Dendritic cell treated with granulocyte-macrophage colony-stimulating factor and Interleukin-4, amounts not matched to agents 40 ng/mL and 50 ng/mL, for 4 days (primary cell): ENCODE measurements at regions of chr17 and their contacts with region 1.

Region 1: GRCh38 chr17:75295201-75296158 is 6.2 kb upstream of the SLC25A19 start:
- H3K4me3 Mint-ChIP-seq: peak overlapping the region; percentile 62
- H3K27ac Mint-ChIP-seq: peak overlapping the region; percentile 97
- H3K4me1 Mint-ChIP-seq: peaks cover 63% of the 10 kb centered on the region
- H3K27me3 Mint-ChIP-seq: no peaks in the 10 kb centered on the region

Region 2: GRCh38 chr17:75159191-75160031 is 136.1 kb before region 1 on chr17:
- intact Hi-C with region 1: no loop called
- H3K4me3 Mint-ChIP-seq: no peak overlapping the region
- H3K27ac Mint-ChIP-seq: no peak overlapping the region
- H3K4me1 Mint-ChIP-seq: peaks cover 10% of the 10 kb centered on the region
- H3K27me3 Mint-ChIP-seq: no peaks in the 10 kb centered on the region

Region 3: GRCh38 chr17:75313941-75314551 is 18.6 kb after region 1 on chr17:
- intact Hi-C with region 1: loop called (anchors 1 kb)
- H3K4me3 Mint-ChIP-seq: peak overlapping the region; percentile 55
- H3K27ac Mint-ChIP-seq: peak overlapping the region; percentile 92
- H3K4me1 Mint-ChIP-seq: peaks cover 83% of the 10 kb centered on the region
- H3K27me3 Mint-ChIP-seq: no peaks in the 10 kb centered on the region